Psoas muscle (tissue), 8 donors: ENCODE measurements at regions of chr1 and their contacts with region 1.

Region 1: DNA sequence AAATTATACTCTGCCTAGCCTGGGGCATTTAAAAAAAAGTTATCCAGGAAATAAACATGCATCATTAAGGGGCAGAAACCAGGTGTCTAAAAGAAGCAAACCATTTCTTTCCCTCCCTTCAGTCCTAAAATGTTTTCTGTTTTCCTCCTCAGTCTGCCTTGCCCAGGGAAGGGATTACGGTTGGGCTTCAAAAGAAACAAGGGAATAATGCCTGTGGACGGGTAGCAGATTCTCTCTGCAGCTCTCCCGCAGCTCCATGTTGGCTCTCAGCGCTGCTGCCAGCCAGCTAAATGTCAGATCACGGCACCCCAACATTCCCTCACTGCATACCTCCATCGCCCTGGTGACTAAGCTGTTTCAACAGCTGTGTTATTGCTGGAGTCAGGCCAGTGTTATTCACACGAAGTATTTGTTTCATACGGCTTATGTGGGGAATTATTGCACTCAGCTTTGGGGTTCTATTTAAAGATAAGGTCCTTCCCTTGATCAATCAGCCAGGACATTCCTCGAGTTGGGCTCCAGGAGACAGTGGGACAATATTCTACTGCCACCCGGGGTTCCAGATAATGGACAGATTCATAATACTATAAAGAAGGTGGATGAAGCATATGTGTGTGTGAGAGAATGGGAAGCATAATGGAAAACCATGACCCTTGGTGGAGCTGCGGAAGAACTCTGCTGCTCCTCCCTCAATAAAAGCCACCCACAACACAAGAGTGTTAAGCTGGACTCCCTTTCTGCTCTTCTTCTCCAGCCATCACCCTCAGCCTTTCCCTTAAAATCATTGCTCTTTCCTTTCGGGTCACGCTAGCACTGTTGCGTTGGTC is 58.2 kb downstream of the WLS start:
- DNase-seq: peak; percentile 38 to 63
- ATAC-seq: peak; percentile 66 to 86 (median 84)
- H3K4me3 ChIP-seq: peak overlapping the region; percentile 46
- H3K27ac ChIP-seq: peak overlapping the region; percentile 87
- H3K4me1 ChIP-seq: peaks cover 52% of the 10 kb centered on the region
- H3K27me3 ChIP-seq: no peaks in the 10 kb centered on the region
- CTCF ChIP-seq: no peak

Region 2: DNA sequence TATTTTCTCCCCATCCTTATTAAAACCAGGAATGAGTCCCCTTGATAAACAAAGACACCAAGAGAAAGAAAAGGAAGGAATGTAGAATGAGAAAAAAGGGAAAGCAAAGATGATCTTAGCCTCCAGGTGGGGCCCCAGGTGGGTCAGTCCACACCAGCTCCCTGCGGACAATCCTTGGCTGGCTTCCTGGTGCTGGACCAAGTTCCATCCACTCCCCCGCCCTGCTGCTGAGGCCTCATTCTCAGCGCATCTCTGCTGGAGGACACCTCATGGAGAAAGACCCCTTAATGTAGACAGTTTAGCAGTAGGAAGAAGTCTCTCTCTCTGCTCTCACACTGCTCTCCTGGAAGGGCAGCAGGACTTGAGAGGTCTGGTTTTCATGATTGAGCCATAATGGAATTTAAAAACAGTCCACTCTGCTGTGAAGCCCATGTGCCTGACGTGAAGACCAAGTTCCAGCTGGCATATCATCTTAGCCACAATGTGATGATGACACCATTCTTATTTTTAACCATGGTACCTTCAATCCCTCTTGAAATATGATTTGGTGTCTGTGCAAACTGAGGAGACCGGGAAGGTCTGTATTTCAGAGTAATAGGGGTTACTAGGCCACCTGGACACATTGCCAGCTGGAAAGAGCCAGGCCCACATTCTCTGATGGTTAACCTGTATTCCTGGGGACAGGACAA is 24.9 kb before region 1 on chr1:
- intact Hi-C with region 1: loop called in 1 of 2 experiments (anchors 2 kb)
- DNase-seq: peak; percentile 53 to 82
- ATAC-seq: peak; percentile 96 to 97 (median 97)
- H3K4me3 ChIP-seq: no peak overlapping the region
- H3K27ac ChIP-seq: peak overlapping the region; percentile 83
- H3K4me1 ChIP-seq: peaks cover 26% of the 10 kb centered on the region
- H3K27me3 ChIP-seq: no peaks in the 10 kb centered on the region
- CTCF ChIP-seq: no peak

Region 3: DNA sequence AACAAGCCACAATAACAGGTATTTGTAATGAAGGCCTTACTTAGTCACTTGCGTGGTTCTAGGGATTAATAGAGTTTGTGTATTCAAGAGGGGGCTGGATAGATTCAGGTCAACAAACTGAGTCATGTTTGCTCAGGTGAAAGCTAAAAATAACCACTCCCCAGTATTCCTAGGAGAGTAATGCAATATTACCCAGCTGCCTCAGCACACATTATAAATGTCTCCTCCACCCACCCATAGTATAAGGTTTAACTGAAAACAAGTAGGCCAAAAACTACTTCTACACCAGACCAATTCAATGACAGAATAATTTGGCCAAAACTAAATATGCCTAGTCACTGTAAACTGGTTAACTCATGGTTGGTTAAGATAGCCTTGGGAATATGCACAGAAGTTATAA is 23.8 kb after region 1 on chr1:
- intact Hi-C with region 1: loop called in 1 of 2 experiments (anchors 2 kb)
- DNase-seq: no peak
- ATAC-seq: peak; percentile 95 to 98 (median 98)
- H3K4me3 ChIP-seq: no peak overlapping the region
- H3K27ac ChIP-seq: peak overlapping the region; percentile 76
- H3K4me1 ChIP-seq: peaks cover 50% of the 10 kb centered on the region
- H3K27me3 ChIP-seq: no peaks in the 10 kb centered on the region
- CTCF ChIP-seq: no peak